Endothelial cell of umbilical vein (primary cell): ENCODE measurements at regions of chr3 and their contacts with region 1.

Region 1: DNA sequence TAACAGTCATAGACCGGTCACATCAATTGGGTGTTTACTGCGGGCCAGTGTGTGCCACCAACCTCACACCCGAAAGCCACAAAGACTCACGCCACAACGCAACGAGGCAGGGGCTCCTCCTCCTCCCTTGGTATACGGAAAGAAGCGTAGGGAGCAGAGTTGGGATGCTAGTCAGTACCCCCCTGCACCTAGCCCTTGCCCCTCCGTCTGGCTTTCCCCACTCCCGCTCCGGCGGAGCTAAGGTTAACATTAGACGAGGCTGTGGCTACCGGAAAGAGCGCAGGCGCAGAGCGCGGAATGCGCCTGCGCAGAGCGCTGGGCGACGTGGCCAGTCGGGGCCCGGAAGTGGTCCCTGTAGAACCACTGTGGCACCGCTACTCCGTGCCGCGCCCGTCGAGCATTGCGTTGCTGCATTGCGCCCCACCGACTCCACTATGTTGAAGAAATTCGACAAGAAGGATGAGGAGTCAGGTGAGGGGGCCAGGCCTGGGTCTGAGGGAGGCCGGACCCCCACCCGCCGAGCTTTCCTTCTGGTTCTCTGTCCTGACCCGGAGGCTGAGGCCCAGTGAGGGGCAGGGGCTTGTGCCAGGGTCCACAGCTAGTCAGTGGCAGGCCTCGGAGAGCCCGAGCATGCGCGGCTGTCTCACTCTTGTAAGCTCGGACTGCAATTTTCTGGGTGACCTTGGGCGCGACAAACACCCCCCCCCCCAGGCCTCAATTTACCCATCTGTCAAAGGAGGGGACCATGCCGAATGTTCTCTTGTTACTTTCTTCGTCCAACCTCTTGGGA is at the start of gene COPG1:
- DNase-seq: peak; percentile 94
- H3K4me3 ChIP-seq: peak within 1 kb of the TSS; percentile 57 to 84 (median 83)
- H3K27ac ChIP-seq: peak within 1 kb of the TSS; percentile 67
- H3K4me1 ChIP-seq: peaks cover 17% of the 10 kb centered on the region
- H3K27me3 ChIP-seq: no peaks in the 10 kb centered on the region
- CTCF ChIP-seq: no peak
- POLR2A ChIP-seq: peak; percentile 98
- total RNA-seq, gene COPG1: 202 and 203 TPM in 2 replicates

Region 2: DNA sequence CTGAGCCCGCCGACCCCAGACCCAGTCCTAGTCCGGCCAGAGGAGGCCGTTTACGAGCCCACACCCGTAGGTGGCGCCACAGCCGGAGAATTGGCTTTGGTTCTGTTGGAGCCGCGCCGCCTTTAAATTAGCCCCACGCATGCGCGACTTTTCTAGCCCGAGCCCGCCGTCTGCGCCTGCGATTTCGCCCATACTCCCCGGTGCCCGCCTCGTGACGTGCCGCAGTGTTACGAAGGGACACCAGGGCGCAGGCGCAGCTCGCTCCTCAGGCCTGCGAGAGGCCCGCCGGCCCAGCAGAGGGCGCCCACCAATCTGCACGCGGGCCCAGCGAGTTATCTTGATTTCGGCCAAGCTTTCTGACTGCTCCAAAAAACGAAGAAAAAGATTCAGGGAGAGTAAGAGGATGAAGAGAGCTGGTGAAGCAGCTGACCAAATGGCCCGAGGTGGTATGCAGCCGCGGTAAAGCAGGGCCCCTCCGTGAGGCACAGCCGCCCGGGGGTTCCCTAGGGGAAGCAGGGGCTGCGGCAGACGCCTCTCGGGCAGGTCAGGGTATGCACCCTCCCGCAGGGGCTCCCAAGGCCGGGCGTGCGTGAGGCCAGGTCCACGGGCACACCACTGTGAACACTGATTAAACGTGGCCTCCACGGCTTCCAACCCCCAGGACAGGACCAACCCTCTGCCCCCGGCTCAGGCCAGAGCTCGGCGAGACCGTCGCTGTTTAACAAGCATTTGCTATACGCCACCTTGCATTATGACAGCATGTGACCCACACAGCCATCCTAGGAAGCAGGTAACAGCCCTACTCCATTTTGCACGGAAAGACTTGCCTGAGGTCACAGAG is 631.7 kb before region 1 on chr3:
- CTCF ChIA-PET with region 1: no interaction called
- POLR2A ChIA-PET with region 1: no interaction called
- dilution Hi-C with region 1: no loop called
- intact Hi-C with region 1: loop called (anchors 5 kb)
- DNase-seq: peak; percentile 98
- H3K4me3 ChIP-seq: peak overlapping the region; percentile 48 to 65 (median 58)
- H3K27ac ChIP-seq: peak overlapping the region; percentile 53
- H3K4me1 ChIP-seq: peaks cover 35% of the 10 kb centered on the region
- H3K27me3 ChIP-seq: no peaks in the 10 kb centered on the region
- CTCF ChIP-seq: peak; percentile 86 to 98
- POLR2A ChIP-seq: no peak

Region 3: DNA sequence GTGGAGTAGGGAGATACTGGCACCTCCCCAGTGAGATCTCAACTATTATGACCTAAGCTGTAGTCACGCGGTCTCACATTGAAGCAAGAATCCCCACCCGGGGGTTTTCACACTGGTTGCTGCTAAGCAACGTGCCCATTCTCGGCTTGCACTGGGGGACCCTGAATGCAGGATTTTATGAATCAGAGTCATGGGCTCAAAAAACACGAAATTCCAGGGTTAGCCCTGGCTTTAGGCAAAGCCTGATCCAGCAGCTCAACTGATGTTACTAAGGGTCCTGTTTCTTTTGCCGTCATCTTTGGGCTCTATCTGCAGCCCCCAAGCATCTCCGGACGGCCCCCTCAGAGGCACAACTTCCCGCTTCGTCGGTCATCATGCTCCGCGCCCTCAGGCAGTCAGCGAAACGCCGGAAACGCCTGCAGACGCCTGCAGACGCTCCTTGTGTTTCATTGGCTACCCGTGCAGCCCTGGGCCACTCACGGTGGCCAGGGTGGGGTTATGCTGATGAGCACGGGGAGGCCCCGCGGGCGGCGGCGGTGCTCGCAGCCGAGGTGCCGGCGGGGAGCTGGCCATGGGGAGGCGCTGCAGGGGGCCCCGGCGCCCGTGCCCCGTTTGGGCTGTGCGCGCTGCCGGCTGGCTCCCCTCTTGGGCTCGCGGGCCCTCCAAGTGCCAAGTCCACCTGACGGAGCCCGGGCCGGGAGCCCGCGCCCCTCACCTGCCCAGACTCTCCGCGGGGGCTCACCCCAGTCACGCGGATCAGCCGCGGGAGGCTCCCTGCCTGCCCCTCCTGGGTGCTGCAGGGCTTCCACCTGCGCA is 222.5 kb before region 1 on chr3:
- CTCF ChIA-PET with region 1: interaction called, 10 read pairs
- POLR2A ChIA-PET with region 1: no interaction called
- dilution Hi-C with region 1: no loop called
- intact Hi-C with region 1: loop called (anchors 1 kb)
- DNase-seq: peak; percentile 91
- H3K4me3 ChIP-seq: peak overlapping the region; percentile 30 to 49 (median 45)
- H3K27ac ChIP-seq: no peak overlapping the region
- H3K4me1 ChIP-seq: peaks cover 10% of the 10 kb centered on the region
- H3K27me3 ChIP-seq: no peaks in the 10 kb centered on the region
- CTCF ChIP-seq: peak; percentile 70 to 86
- POLR2A ChIP-seq: peak; percentile 43

Region 4: GRCh38 chr3:129120254-129121004 is 129.0 kb before region 1 on chr3:
- CTCF ChIA-PET with region 1: interaction called, 8 read pairs
- POLR2A ChIA-PET with region 1: no interaction called
- dilution Hi-C with region 1: no loop called
- intact Hi-C with region 1: loop called (anchors 2 kb)
- DNase-seq: peak; percentile 87
- H3K4me3 ChIP-seq: peak overlapping the region; percentile 64 to 79 (median 66)
- H3K27ac ChIP-seq: peak overlapping the region; percentile 66
- H3K4me1 ChIP-seq: peaks cover 27% of the 10 kb centered on the region
- H3K27me3 ChIP-seq: no peaks in the 10 kb centered on the region
- CTCF ChIP-seq: peak in 1 of 2 donors; percentile 22
- POLR2A ChIP-seq: peak; percentile 79

Region 5: DNA sequence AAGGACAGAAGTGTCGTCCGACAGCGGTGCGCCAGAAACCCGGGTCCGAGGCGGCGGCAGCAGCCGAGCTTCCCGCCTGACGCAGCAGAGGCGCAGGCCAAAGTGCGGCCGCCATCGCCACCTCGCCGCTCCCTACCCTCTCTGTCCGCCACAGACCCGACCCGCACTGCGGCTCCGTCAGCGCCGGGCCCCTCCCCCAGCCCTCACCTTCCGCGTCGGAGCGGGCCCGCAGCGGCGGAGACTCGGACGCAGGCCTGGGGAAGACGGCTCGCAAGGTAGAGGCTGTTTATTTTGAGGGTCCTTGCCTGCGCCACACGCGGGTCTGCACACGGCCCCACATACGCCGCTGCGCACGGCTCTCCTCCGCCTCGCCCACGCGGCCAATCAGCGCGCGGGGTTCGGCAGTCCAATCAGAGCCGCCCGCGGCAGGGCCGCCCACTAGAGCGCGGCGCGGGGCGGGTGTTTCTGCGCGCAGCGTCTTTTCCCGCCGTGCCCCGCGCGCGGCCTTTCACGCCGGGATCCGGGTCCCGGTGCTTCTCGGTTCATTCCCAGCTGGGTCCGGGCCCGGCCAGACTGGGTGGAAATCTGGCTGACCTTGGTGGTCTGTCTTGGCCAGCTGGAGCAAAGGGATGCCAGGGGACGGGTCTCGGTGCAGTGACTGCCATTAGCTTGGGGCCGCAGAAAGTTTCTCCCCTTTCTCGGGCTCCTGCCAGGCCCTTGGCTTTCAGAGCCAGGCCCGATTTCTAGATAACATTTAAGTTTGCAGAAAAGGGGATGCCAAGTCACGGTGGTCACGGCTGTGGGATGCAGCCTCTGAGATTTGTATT is 65.7 kb before region 1 on chr3 and contains the start of gene CNBP:
- CTCF ChIA-PET with region 1: interaction called, 32 read pairs
- POLR2A ChIA-PET with region 1: no interaction called
- dilution Hi-C with region 1: no loop called
- intact Hi-C with region 1: loop called (anchors 1 kb)
- DNase-seq: peak; percentile 95
- H3K4me3 ChIP-seq: peak within 1 kb of the TSS; percentile 82 to 96 (median 88)
- H3K27ac ChIP-seq: peak within 1 kb of the TSS; percentile 87
- H3K4me1 ChIP-seq: peaks cover 37% of the 10 kb centered on the region
- H3K27me3 ChIP-seq: no peaks in the 10 kb centered on the region
- CTCF ChIP-seq: no peak
- POLR2A ChIP-seq: peak; percentile 96
- total RNA-seq, gene CNBP: 197 and 205 TPM in 2 replicates

Region 6: GRCh38 chr3:129211772-129212171 is 37.7 kb before region 1 on chr3:
- CTCF ChIA-PET with region 1: interaction called, 10 read pairs
- POLR2A ChIA-PET with region 1: interaction called, 3 read pairs
- dilution Hi-C with region 1: no loop called
- intact Hi-C with region 1: loop called (anchors 5 kb)
- DNase-seq: peak; percentile 75
- H3K4me3 ChIP-seq: no peak overlapping the region
- H3K27ac ChIP-seq: no peak overlapping the region
- H3K4me1 ChIP-seq: peaks cover 8% of the 10 kb centered on the region
- H3K27me3 ChIP-seq: no peaks in the 10 kb centered on the region
- CTCF ChIP-seq: no peak
- POLR2A ChIP-seq: no peak

Region 7: GRCh38 chr3:129230311-129231019 is 19.0 kb before region 1 on chr3:
- CTCF ChIA-PET with region 1: interaction called, 15 read pairs
- POLR2A ChIA-PET with region 1: no interaction called
- dilution Hi-C with region 1: no loop called
- intact Hi-C with region 1: loop called (anchors 1 kb)
- DNase-seq: peak; percentile 46
- H3K4me3 ChIP-seq: no peak overlapping the region
- H3K27ac ChIP-seq: no peak overlapping the region
- H3K4me1 ChIP-seq: peaks cover 35% of the 10 kb centered on the region
- H3K27me3 ChIP-seq: no peaks in the 10 kb centered on the region
- CTCF ChIP-seq: no peak
- POLR2A ChIP-seq: no peak

Region 8: DNA sequence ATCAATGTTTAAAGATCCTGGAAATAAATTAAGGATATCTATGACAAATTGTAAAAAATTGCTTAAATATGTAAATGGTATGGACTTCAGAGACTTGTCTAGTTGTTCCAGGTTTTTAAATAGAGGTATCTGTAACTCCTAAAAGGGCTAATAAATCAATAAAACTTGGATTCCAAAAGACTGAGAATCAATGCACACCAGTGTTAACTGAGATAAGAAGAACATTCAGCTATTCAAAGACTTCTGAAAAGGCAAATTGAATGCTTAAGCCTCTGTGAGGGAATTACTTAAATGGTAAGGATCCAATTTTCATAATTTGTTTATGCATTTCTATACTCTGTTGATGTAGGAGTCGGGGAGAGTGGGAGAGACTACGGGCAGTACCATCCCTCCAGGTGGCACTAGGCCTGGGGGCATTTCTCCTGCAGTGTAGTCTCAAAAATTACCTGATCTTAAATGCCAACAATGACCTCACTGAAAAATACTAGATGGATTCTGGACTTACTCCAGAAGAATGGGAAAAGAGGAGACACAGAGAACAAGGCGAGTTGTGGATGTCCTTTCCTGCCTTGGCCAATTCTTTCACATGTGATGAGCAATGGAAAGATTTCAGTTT is 434.7 kb after region 1 on chr3:
- CTCF ChIA-PET with region 1: no interaction called
- POLR2A ChIA-PET with region 1: no interaction called
- dilution Hi-C with region 1: no loop called
- intact Hi-C with region 1: no loop called
- DNase-seq: no peak
- H3K4me3 ChIP-seq: no peak overlapping the region
- H3K27ac ChIP-seq: no peak overlapping the region
- H3K4me1 ChIP-seq: no peaks in the 10 kb centered on the region
- H3K27me3 ChIP-seq: no peaks in the 10 kb centered on the region
- CTCF ChIP-seq: no peak
- POLR2A ChIP-seq: no peak